ENCODE measurements at regions of chr20 and their contacts with region 1.

Region 1: DNA sequence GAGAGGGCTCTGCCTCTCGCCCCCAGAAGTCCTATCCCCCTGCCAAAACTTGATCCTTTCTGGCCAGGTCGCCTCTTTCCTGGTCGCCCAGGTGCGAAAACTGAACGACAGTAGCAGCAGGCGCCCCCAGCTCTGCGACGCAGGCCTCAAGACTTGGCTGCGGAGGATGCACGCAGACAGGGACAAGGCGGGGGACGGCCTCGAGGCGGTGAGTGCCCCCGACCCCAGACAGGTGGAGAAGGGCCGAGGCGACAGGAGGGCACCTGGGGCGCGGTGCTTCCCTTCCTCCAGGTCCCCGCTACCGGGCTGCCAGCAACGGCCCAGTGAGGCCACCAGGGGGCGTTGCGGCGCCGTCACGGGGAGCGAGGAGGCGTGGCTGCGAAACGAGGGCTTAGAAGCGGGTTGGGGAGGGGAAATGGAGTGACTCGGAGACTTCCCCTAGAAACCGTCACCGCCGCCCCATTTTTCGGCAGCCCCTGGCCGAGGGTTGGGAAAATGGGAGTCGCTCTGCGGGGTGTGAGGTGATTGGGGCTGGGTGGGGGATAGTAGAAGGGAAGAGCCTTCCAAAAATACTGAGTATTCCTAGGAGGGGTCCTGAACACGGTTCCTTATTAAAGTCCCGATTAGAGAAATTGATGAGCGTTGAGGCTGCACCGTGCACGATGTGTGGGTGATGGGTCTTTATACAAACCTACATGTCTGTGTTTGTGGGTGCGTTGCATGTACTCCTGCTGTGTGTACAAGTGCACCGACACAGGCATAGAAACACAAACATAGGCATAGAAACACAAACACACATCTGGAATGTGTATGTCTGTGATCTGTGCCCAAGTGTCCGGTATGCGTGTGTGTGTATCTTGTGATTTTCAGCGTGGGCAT is 44.6 kb downstream of the ARHGAP40 start:
- DNase-seq: peak; percentile 81 to 95 (median 90)
- ATAC-seq: peak; percentile 100
- H3K4me3 ChIP-seq: peak overlapping the region; percentile 24
- H3K4me3 Mint-ChIP-seq: peak overlapping the region; percentile 75
- H3K27ac ChIP-seq: no peak overlapping the region
- H3K27ac Mint-ChIP-seq: no peak overlapping the region
- H3K4me1 ChIP-seq: peaks cover 12% of the 10 kb centered on the region
- H3K4me1 Mint-ChIP-seq: peaks cover 8% of the 10 kb centered on the region
- H3K27me3 ChIP-seq: peaks cover 38 to 42% of the 10 kb centered on the region in 2 experiments
- H3K27me3 Mint-ChIP-seq: peaks cover 62% of the 10 kb centered on the region
- CTCF ChIP-seq: peak; percentile 93

Region 2: GRCh38 chr20:38685853-38686473 is 39.7 kb after region 1 on chr20:
- CTCF ChIA-PET with region 1: no interaction called
- POLR2A ChIA-PET with region 1: no interaction called
- intact Hi-C with region 1: loop called in 1 of 2 experiments (anchors 2 kb)
- DNase-seq: peak; percentile 11 to 63 (median 27)
- ATAC-seq: peak; percentile 55
- H3K4me3 ChIP-seq: no peak overlapping the region
- H3K4me3 Mint-ChIP-seq: no peak overlapping the region
- H3K27ac ChIP-seq: no peak overlapping the region
- H3K27ac Mint-ChIP-seq: no peak overlapping the region
- H3K4me1 ChIP-seq: no peaks in the 10 kb centered on the region
- H3K4me1 Mint-ChIP-seq: no peaks in the 10 kb centered on the region
- H3K27me3 ChIP-seq: peaks cover 29 to 37% of the 10 kb centered on the region in 2 experiments
- H3K27me3 Mint-ChIP-seq: peaks cover 89% of the 10 kb centered on the region
- CTCF ChIP-seq: no peak

Region 3: GRCh38 chr20:38790200-38791053 is 144.2 kb after region 1 on chr20:
- CTCF ChIA-PET with region 1: no interaction called
- POLR2A ChIA-PET with region 1: no interaction called
- intact Hi-C with region 1: loop called (anchors 1 to 2 kb)
- DNase-seq: peak in 9 of 14 experiments; percentile 17 to 79 (median 51)
- ATAC-seq: peak; percentile 96
- H3K4me3 ChIP-seq: no peak overlapping the region
- H3K4me3 Mint-ChIP-seq: no peak overlapping the region
- H3K27ac ChIP-seq: no peak overlapping the region
- H3K27ac Mint-ChIP-seq: no peak overlapping the region
- H3K4me1 ChIP-seq: peaks cover 10% of the 10 kb centered on the region
- H3K4me1 Mint-ChIP-seq: peaks cover 13% of the 10 kb centered on the region
- H3K27me3 ChIP-seq: no peaks in the 10 kb centered on the region
- H3K27me3 Mint-ChIP-seq: no peaks in the 10 kb centered on the region
- CTCF ChIP-seq: peak; percentile 85

Region 4: GRCh38 chr20:38962044-38962927 is 316.1 kb after region 1 on chr20 and contains the start of gene DHX35:
- CTCF ChIA-PET with region 1: interaction called, 3 read pairs
- POLR2A ChIA-PET with region 1: no interaction called
- intact Hi-C with region 1: loop called (anchors 1 kb)
- DNase-seq: peak; percentile 96 to 100 (median 98)
- ATAC-seq: peak; percentile 98
- H3K4me3 ChIP-seq: peak within 1 kb of the TSS; percentile 80
- H3K4me3 Mint-ChIP-seq: peak within 1 kb of the TSS; percentile 97
- H3K27ac ChIP-seq: peak within 1 kb of the TSS; percentile 73 to 77
- H3K27ac Mint-ChIP-seq: peak within 1 kb of the TSS; percentile 88
- H3K4me1 ChIP-seq: peaks cover 16% of the 10 kb centered on the region
- H3K4me1 Mint-ChIP-seq: peaks cover 33% of the 10 kb centered on the region
- H3K27me3 ChIP-seq: no peaks in the 10 kb centered on the region
- H3K27me3 Mint-ChIP-seq: no peaks in the 10 kb centered on the region
- CTCF ChIP-seq: peak; percentile 23
- total RNA-seq, gene DHX35: 7.3 to 7.6 TPM

Region 5: GRCh38 chr20:39081255-39081654 is 435.0 kb after region 1 on chr20:
- CTCF ChIA-PET with region 1: no interaction called
- POLR2A ChIA-PET with region 1: no interaction called
- intact Hi-C with region 1: loop called in 1 of 2 experiments (anchors 10 kb)
- DNase-seq: peak; percentile 67 to 89 (median 80)
- ATAC-seq: peak; percentile 68
- H3K4me3 ChIP-seq: no peak overlapping the region
- H3K4me3 Mint-ChIP-seq: no peak overlapping the region
- H3K27ac ChIP-seq: no peak overlapping the region
- H3K27ac Mint-ChIP-seq: no peak overlapping the region
- H3K4me1 ChIP-seq: no peaks in the 10 kb centered on the region
- H3K4me1 Mint-ChIP-seq: peaks cover 4% of the 10 kb centered on the region
- H3K27me3 ChIP-seq: peaks cover 0 to 14% of the 10 kb centered on the region in 2 experiments
- H3K27me3 Mint-ChIP-seq: peaks cover 40% of the 10 kb centered on the region
- CTCF ChIP-seq: peak; percentile 83

Measured in CD4-positive, alpha-beta T cell (primary cell).